ENCODE measurements at regions of chr2 and their contacts with region 1.

Region 1: DNA sequence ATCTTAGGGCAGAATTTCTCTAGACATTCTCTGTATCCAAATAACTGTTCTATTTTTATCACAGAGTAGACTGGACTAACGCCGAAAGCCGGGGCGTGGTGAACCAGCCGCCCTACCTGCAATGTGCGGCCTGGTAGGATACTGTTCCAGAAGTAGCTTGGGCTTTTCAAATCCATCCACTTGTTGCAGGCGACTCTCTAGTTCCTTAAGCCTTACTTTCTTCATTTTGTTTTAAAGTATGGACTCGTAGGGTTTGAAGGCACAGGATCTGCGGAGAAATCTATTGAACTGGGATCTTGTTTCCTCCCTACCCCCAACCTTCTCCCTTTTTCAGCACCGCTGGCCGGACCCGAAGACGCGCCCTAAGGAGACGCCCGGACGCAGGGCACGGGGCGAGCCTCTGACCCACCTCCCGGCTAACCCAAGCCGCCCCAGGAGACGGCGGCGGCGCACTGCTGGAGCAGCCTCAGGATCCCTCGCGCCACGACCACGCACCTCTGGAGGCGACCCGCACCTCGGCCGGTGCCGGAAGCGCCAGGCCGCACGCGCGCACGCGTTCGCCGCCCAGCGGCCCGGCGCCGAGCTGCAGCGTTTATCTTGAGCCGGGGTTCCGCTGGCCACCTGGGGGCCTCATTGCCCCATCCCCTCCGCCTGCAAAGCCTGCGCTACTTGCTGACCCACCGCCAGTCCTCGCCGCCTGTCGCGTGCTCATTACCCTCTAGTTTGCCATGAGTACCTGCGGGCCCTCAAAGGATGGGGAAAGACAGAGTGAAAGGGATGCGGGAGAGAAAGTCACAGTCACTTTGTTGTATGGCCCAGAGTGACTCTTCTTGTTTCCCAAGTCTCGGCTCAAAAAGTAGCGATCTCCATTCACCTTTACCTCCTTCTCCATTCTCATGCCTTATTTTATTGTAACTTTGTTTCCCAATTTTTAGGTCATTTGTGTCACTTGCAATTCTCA is at the start of gene METTL5:
- DNase-seq: peak; percentile 95
- H3K4me3 ChIP-seq: peak within 1 kb of the TSS; percentile 77
- H3K27ac ChIP-seq: peak within 1 kb of the TSS; percentile 61 to 73
- H3K4me1 ChIP-seq: peaks cover 17 to 18% of the 10 kb centered on the region in 2 experiments; a peak in 3 of 4 replicates
- H3K27me3 ChIP-seq: no peaks in the 10 kb centered on the region
- CTCF ChIP-seq: peak; percentile 95
- EP300 ChIP-seq: 0 out of 4 replicates have a peak, but pooled peaks of 1 of the 2 experiments have one; percentile 6
- RAD21 ChIP-seq: peak; percentile 79
- polyA plus RNA-seq, gene METTL5: 40.7 and 51.3 TPM in 2 replicates

Region 2: DNA sequence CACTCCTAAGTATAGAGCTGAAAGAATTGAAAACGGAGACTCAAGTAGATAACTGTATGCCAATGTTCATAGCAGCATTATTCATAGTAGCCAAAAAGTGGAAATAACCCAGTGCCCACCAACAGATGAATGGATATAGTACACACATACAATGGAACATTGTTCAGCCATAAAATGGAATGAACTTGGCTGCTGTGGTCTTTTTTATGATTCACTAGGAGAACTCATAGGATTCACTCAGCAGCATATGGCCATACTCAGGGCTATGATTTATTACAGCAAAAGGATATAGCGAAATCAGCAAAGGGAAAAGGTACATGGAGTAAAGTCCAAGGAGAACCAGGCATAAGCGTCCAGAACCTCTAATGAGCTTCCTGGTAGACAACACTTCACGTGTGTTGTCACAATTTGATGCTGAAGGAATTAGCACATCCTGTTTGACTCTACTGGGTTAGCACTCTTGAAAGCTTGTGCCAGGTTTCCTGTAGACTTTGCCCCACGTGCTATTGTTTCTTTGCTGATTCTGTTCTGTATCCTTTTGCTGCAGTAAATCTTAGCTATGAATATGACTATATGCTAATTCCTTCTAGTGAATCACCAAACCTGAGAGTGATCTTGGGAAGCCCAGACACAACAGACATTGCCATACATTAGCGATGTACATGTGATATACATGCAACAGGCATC is 950.1 kb before region 1 on chr2:
- CTCF ChIA-PET with region 1: no interaction called
- POLR2A ChIA-PET with region 1: no interaction called
- DNase-seq: no peak
- H3K4me3 ChIP-seq: no peak overlapping the region
- H3K27ac ChIP-seq: no peak overlapping the region
- H3K4me1 ChIP-seq: no peaks in the 10 kb centered on the region; a peak in 1 of 4 replicates
- H3K27me3 ChIP-seq: no peaks in the 10 kb centered on the region
- CTCF ChIP-seq: no peak
- EP300 ChIP-seq: no peak
- RAD21 ChIP-seq: no peak

Region 3: DNA sequence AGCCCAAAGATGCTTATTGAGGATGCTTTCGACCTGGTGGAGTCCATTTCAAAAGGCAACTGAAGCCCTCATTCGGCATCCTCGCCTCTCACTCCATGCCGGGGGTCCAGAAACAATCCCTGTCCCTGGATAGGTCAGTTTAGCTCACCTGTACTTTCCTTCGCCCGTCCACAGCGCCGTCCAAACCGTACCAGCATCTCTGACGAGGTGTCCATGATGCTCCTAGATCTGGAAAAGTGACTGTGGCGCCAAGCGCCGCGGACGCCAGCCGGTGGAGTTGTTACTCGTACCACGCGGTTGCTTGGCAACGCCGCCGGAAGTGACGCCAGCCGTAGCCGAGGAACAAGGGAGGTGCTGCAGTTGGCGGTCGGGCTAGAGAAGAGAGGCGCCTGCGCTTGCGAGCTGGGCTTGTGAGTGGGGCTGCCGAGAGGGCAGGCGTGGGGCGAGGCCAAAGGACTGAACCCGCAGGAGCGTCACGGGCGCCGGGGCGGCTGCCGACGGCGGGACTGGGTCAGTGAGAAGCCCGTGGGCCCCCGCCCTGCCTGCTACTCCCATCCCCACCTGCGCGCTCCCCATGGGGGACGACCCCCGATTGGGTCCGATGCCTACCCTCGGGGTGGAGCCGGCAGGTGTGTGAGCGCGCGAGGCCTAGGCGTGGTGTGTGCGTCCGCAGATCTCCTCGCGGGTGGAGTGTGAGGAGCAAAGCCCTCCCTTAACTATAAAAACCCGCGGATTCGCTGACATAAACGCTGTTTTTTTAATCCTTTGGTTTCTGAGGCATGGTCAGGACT is 130.3 kb before region 1 on chr2 and contains the starts of genes CFAP210 and PHOSPHO2:
- CTCF ChIA-PET with region 1: interaction called, 11 read pairs
- POLR2A ChIA-PET with region 1: no interaction called
- DNase-seq: peak; percentile 94
- H3K4me3 ChIP-seq: peak within 1 kb of the TSS; percentile 81 to 89
- H3K27ac ChIP-seq: peak within 1 kb of the TSS; percentile 76 to 83
- H3K4me1 ChIP-seq: peaks cover 5 to 7% of the 10 kb centered on the region in 2 experiments; a peak in 3 of 4 replicates
- H3K27me3 ChIP-seq: no peaks in the 10 kb centered on the region
- CTCF ChIP-seq: no peak
- EP300 ChIP-seq: no peak
- RAD21 ChIP-seq: peak; percentile 31; the same call in 1 of the 2 replicates
- polyA plus RNA-seq, gene CFAP210: 0.03 TPM in 1 of 2 replicates, not detected in the other
- polyA plus RNA-seq, gene PHOSPHO2: 0.99 and 1.1 TPM in 2 replicates

Region 4: DNA sequence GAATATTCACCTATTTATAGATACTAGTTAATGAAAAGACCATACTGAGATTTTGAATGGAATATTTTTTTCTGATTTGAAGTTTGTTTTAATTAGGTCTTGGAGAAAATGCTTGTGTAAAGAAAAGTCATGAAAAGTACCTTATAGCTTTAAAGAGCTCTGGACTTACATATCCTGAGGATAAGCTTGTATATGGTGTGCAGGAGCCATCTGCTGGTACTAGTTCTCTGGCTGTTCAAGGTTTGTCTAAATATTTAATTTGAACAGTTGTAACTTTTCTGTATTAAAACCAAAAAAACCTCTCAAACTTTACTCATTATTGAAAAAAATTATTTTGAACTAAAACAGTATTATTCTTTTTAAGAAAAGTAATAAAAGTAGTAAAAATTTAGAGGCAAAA is 52.7 kb after region 1 on chr2:
- CTCF ChIA-PET with region 1: interaction called, 29 read pairs
- POLR2A ChIA-PET with region 1: interaction called, 5 read pairs
- DNase-seq: peak; percentile 22
- H3K4me3 ChIP-seq: no peak overlapping the region
- H3K27ac ChIP-seq: no peak overlapping the region
- H3K4me1 ChIP-seq: no peaks in the 10 kb centered on the region
- H3K27me3 ChIP-seq: no peaks in the 10 kb centered on the region
- CTCF ChIP-seq: peak; percentile 53
- EP300 ChIP-seq: no peak
- RAD21 ChIP-seq: peak; percentile 68

Region 5: GRCh38 chr2:169895294-169895985 is 70.8 kb after region 1 on chr2:
- CTCF ChIA-PET with region 1: interaction called, 15 read pairs
- POLR2A ChIA-PET with region 1: no interaction called
- DNase-seq: no peak
- H3K4me3 ChIP-seq: no peak overlapping the region
- H3K27ac ChIP-seq: peak overlapping the region in 1 of 2 experiments; percentile 11; a peak in 1 of 4 replicates
- H3K4me1 ChIP-seq: peaks cover 0 to 5% of the 10 kb centered on the region in 2 experiments; a peak in 3 of 4 replicates
- H3K27me3 ChIP-seq: no peaks in the 10 kb centered on the region
- CTCF ChIP-seq: no peak
- EP300 ChIP-seq: no peak
- RAD21 ChIP-seq: no peak

Region 6: DNA sequence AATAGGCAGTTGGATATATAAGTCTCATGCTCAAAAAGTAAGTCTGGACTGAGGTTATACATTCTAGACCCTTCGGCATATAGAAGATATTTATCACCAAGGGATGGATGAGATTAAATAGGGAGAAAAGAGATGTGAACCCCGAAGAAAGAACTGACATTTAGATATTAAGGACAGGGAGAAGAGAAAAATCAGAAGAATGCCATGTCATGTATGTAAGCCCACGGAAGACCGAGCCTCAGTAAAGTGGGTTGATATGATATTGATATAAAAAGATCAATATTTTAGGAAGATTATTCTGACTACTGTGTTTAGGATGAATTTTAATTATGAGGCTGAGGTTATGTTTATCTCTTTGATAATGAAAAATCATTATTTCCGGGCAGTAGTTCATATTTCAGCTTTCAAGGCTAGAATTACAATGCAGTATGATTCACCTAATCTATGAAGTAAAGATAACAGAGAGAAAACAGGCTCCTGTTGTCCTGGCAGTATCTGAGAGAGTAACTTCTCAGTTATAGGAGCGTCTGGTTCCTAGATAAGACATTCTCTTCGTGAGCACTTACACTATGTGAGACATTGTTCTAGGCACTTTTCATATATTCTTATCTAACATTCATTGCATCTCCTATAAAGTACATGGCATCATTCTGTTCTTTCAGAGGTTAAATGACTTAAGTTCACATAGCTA is 85.6 kb after region 1 on chr2:
- CTCF ChIA-PET with region 1: interaction called, 12 read pairs
- POLR2A ChIA-PET with region 1: no interaction called
- DNase-seq: peak; percentile 36
- H3K4me3 ChIP-seq: no peak overlapping the region
- H3K27ac ChIP-seq: no peak overlapping the region
- H3K4me1 ChIP-seq: peaks cover 0 to 6% of the 10 kb centered on the region in 2 experiments; a peak in 2 of 4 replicates
- H3K27me3 ChIP-seq: no peaks in the 10 kb centered on the region
- CTCF ChIP-seq: no peak
- EP300 ChIP-seq: 0 out of 4 replicates have a peak, but pooled peaks of 1 of the 2 experiments have one; percentile 25
- RAD21 ChIP-seq: no peak

Region 7: DNA sequence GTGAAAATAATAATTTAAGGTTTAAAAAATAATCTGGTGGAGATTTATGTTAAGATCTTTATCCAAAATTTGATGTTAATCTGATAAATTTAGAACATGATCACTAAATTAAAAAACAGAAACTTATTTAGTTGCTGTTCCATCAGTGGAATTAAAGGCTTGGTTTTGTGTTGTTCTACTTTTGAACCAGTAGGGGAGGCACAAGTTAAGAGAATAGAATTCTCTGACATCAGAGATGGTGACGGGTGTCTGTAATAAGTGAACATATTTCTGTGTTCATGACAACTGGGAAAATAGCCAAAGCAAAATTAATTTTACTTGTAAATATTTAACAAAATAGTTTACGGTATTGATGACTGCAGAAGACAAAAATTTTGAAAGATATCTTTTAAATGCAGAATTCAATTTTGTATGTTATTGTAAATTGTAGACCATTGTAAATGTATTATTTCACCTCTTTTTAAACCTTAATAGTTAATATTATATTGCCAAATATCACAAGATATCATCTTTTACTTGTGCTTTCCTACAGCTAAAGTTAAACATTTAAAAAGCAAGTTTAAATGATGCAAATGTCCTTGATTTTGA is 108.6 kb after region 1 on chr2:
- CTCF ChIA-PET with region 1: interaction called, 28 read pairs
- POLR2A ChIA-PET with region 1: no interaction called
- DNase-seq: peak; percentile 54
- H3K4me3 ChIP-seq: peak overlapping the region in 1 of 2 experiments; percentile 32; a peak in 1 of 4 replicates
- H3K27ac ChIP-seq: no peak overlapping the region
- H3K4me1 ChIP-seq: no peaks in the 10 kb centered on the region; a peak in 1 of 4 replicates
- H3K27me3 ChIP-seq: no peaks in the 10 kb centered on the region
- CTCF ChIP-seq: peak; percentile 83
- EP300 ChIP-seq: no peak
- RAD21 ChIP-seq: peak; percentile 95

Measured in SK-N-SH (cell line).